ENCODE measurements at regions of chr1 and their contacts with region 1.

Region 1: GRCh38 chr1:37486680-37487618 is 12.6 kb downstream of the ZC3H12A start:
- DNase-seq: peak; percentile 47
- ATAC-seq: peak; percentile 73
- H3K4me3 ChIP-seq: no peak overlapping the region
- H3K27ac ChIP-seq: no peak overlapping the region
- H3K4me1 ChIP-seq: peaks cover 10% of the 10 kb centered on the region
- H3K27me3 ChIP-seq: no peaks in the 10 kb centered on the region
- CTCF ChIP-seq: peak; percentile 95
- EP300 ChIP-seq: no peak
- POLR2A ChIP-seq: no peak
- RAD21 ChIP-seq: peak; percentile 92

Region 2: DNA sequence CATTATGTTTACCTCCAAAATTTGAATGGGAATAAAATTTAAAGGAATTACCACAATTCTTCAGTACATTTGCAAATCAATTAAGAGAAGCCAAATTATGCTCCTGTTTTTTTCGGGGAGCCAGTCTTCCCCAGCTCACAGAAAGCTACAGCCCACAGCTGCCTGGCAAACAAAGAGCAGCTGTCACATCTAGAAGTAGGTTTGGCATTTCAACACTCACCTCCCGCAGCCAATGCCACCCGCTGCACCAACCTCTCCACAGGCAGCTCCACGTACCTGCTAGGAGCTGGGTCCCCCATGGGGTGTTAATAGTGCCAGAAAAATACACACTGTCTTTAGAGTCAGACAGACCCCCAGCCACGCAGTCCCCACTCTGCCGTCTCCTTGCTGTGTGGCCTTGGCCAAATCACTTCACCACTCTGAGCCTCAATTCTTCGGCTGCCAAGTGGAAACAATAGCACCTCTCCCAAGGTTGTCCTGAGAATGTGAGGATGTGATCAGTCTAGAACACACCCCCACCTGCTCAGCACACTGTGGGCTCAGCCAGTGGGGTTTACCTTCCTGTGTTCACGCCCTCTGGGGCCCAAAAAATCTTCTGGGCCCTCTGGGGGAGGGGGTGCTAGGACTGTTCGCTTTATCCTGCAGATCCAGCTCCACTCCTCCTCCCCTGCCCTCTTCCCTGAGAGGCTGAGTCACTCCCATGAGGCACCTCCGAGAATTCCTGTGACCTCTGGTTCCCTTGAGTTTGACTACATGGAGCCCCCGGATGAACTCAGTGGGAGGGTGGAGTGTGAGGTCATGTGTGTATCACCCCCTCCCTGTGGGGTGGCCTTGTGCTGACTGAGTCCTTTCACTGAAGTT is 248.4 kb before region 1 on chr1:
- CTCF ChIA-PET with region 1: no interaction called
- POLR2A ChIA-PET with region 1: no interaction called
- in situ Hi-C with region 1: no loop called
- intact Hi-C with region 1: no loop called
- DNase-seq: no peak
- ATAC-seq: no peak
- H3K4me3 ChIP-seq: no peak overlapping the region
- H3K27ac ChIP-seq: no peak overlapping the region
- H3K4me1 ChIP-seq: no peaks in the 10 kb centered on the region
- H3K27me3 ChIP-seq: peaks cover 0 to 15% of the 10 kb centered on the region in 2 experiments; a peak in 3 of 5 replicates
- CTCF ChIP-seq: no peak
- EP300 ChIP-seq: no peak
- POLR2A ChIP-seq: no peak
- RAD21 ChIP-seq: no peak

Region 3: DNA sequence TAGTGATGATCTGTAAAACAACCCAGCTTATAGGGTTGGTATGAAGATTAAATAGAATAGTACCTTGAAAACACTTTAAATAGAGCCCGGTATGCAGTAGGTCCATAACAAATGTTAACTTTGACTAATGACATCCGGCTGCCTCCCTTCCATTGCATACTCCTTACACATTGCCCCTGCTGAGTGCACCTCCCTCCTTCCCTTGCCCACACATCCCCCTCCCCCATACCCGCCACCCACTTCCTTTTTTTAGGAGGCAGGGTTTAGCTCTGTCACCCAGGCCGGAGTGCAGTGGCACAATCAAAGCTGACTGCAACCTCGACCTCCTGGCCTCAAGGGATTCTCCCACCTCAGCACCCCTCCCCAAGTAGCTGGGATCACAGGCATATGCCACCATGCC is 37.0 kb before region 1 on chr1:
- CTCF ChIA-PET with region 1: interaction called, 61 read pairs
- POLR2A ChIA-PET with region 1: interaction called, 3 read pairs
- in situ Hi-C with region 1: loop called (anchors 5 kb)
- intact Hi-C with region 1: loop called (anchors 1 kb)
- DNase-seq: no peak
- ATAC-seq: no peak
- H3K4me3 ChIP-seq: no peak overlapping the region
- H3K27ac ChIP-seq: no peak overlapping the region
- H3K4me1 ChIP-seq: peaks cover under 1% of the 10 kb centered on the region; the same call in 1 of the 2 replicates
- H3K27me3 ChIP-seq: peaks cover 4 to 28% of the 10 kb centered on the region in 2 experiments; a peak in 4 of 5 replicates
- CTCF ChIP-seq: no peak
- EP300 ChIP-seq: no peak
- POLR2A ChIP-seq: no peak
- RAD21 ChIP-seq: no peak

Region 4: DNA sequence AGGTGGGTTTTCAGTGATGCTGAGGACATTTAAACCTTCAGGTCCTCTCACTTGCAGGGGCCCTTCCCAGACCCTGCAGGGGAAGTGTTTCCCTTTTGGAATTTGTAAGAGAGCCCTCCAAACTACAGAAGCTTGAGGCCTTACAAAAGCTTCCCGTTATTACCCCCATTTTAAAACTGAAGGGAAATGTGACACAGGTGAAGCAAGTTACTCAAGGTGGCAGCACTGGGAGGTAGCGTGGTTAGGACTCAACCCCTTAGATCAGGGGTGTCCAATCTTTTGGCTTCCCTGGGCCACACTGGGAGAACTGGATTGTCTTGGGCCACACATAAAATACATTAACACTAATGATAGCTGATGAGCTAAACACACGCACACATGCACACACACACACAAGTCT is 28.4 kb before region 1 on chr1:
- CTCF ChIA-PET with region 1: interaction called, 61 read pairs
- POLR2A ChIA-PET with region 1: interaction called, 5 read pairs
- in situ Hi-C with region 1: loop called (anchors 5 kb)
- intact Hi-C with region 1: loop called (anchors 1 kb)
- DNase-seq: no peak
- ATAC-seq: peak; percentile 34; the same call in 2 of the 3 replicates
- H3K4me3 ChIP-seq: no peak overlapping the region
- H3K27ac ChIP-seq: no peak overlapping the region
- H3K4me1 ChIP-seq: peaks cover 19% of the 10 kb centered on the region
- H3K27me3 ChIP-seq: no peaks in the 10 kb centered on the region
- CTCF ChIP-seq: 0 out of 2 replicates have a peak, but pooled peaks have one; percentile 36
- EP300 ChIP-seq: no peak
- POLR2A ChIP-seq: no peak
- RAD21 ChIP-seq: no peak

Region 5: GRCh38 chr1:37474046-37474759 is 12.7 kb before region 1 on chr1 and contains the start of gene ZC3H12A:
- CTCF ChIA-PET with region 1: interaction called, 3 read pairs
- POLR2A ChIA-PET with region 1: interaction called, 57 read pairs
- in situ Hi-C with region 1: no loop called
- intact Hi-C with region 1: no loop called
- DNase-seq: peak; percentile 78
- ATAC-seq: peak; percentile 51
- H3K4me3 ChIP-seq: peak within 1 kb of the TSS; percentile 70 to 85 (median 80)
- H3K27ac ChIP-seq: peak within 1 kb of the TSS; percentile 64
- H3K4me1 ChIP-seq: peaks cover 82% of the 10 kb centered on the region
- H3K27me3 ChIP-seq: no peaks in the 10 kb centered on the region; a peak in 1 of 5 replicates
- CTCF ChIP-seq: no peak
- EP300 ChIP-seq: peak in 1 of 2 experiments; percentile 32; a peak in 2 of 4 replicates
- POLR2A ChIP-seq: peak in 1 of 2 experiments; percentile 82; a peak in 2 of 4 replicates
- RAD21 ChIP-seq: peak; percentile 23; the same call in 1 of the 2 replicates
- total RNA-seq, gene ZC3H12A: 4.2 and 6.8 TPM in 2 replicates

Measured in HepG2 (cell line).